ENCODE measurements at regions of chr12 and their contacts with region 1.

Region 1: DNA sequence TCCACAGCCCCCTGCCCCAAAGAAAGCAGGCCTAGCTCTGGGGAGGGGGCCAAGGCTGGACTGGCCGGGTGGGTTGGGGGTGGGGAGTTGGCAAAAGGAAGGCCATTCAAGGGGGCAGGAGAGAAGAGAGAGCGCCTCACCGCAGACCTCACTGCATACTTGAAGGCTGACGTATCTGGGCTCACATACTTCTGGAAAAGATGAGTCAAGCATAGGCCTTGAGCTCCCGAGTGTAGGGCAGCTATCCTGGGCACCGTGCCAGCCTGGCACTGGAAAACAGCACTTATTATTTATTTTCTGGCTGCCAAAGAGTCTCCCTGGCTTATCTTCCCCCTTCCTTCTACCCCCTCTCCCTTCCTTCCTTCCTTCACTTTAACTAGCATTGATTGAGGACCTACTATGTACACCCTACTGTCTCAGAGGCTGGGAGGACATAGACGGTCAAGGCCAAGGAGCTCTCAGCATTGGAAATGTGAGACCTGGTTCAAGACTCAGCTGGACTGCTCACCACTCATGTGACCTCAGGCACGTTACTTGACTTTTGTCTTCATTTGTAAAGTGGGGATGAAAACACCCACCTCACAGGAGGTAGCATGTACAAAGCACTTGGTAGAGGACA is 468 bp upstream of the KRT80 start:
- DNase-seq: peak; percentile 99
- ATAC-seq: peak; percentile 86
- H3K4me3 ChIP-seq: peak overlapping the region; percentile 78
- H3K27ac ChIP-seq: peak overlapping the region; percentile 69
- H3K4me1 ChIP-seq: peaks cover 80% of the 10 kb centered on the region
- H3K27me3 ChIP-seq: no peaks in the 10 kb centered on the region
- CTCF ChIP-seq: no peak

Region 2: DNA sequence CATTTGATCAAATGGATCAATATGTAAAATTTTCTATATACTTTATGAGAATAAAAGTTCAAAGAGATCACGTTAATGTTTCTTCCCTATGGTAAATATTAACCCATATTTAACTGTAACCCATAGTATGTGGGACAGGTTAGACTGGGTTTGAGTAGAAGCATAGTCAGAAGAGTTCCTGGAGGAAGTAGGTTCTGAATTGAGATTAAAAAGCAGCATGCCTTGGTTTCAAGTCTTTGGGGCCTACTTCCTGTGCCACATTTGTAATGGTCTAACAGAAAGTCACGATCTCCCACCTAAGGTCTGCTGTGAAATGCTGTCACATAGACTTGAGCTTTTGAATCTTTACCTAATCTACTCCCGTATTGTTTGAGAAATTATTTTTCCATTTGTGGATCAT is 407.6 kb before region 1 on chr12:
- CTCF ChIA-PET with region 1: no interaction called
- POLR2A ChIA-PET with region 1: no interaction called
- intact Hi-C with region 1: no loop called
- DNase-seq: no peak
- ATAC-seq: no peak
- H3K4me3 ChIP-seq: no peak overlapping the region
- H3K27ac ChIP-seq: no peak overlapping the region
- H3K4me1 ChIP-seq: no peaks in the 10 kb centered on the region
- H3K27me3 ChIP-seq: no peaks in the 10 kb centered on the region
- CTCF ChIP-seq: no peak

Region 3: GRCh38 chr12:52166672-52167071 is 25.6 kb before region 1 on chr12:
- CTCF ChIA-PET with region 1: no interaction called
- POLR2A ChIA-PET with region 1: no interaction called
- intact Hi-C with region 1: loop called (anchors 1 kb)
- DNase-seq: no peak
- ATAC-seq: no peak
- H3K4me3 ChIP-seq: no peak overlapping the region
- H3K27ac ChIP-seq: no peak overlapping the region
- H3K4me1 ChIP-seq: peaks cover 50% of the 10 kb centered on the region
- H3K27me3 ChIP-seq: no peaks in the 10 kb centered on the region
- CTCF ChIP-seq: no peak

Region 4: GRCh38 chr12:52230327-52231291 is 38.3 kb after region 1 on chr12:
- CTCF ChIA-PET with region 1: interaction called, 3 read pairs
- POLR2A ChIA-PET with region 1: interaction called, 6 read pairs
- intact Hi-C with region 1: loop called (anchors 2 kb)
- DNase-seq: peak; percentile 95
- ATAC-seq: peak; percentile 70
- H3K4me3 ChIP-seq: no peak overlapping the region; the same call in 1 of the 2 replicates
- H3K27ac ChIP-seq: peak overlapping the region; percentile 91
- H3K4me1 ChIP-seq: peaks cover 61% of the 10 kb centered on the region
- H3K27me3 ChIP-seq: no peaks in the 10 kb centered on the region
- CTCF ChIP-seq: no peak